Left ventricle myocardium superior (tissue), 1 donor: ENCODE measurements at regions of chr5 and their contacts with region 1.

Region 1: DNA sequence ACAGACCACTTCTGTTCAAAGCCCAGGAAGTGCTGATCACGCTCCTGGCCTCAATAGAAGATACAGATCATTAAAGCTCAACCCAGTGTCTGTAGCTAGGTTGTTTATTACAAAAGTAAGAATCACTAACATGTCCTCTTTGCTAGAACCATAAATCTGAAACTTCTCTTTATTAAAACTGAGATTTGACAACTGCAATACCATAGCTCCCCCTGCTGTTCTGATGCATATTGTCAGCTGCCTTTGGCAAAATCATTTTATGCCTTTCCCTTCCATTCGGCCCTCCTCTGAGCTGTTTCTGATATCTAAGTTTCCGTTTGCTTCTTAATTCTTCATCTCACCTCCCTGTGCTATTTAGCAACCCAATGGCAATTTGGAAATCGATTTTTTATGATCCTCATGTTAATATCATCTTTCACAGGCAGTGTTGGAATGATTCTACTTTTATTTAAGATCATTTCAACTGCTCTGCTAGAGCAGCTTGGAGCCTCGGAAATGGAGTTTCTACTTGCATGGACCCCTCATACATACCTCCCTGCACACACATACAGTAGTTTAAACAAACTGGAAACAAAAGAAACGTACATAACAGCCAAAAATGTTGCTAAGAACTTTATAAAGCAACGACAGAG is 998.8 kb downstream of the MAT2B start:
- DNase-seq: no peak
- ATAC-seq: no peak

Region 2: GRCh38 chr5:163564321-163564938 is 939.8 kb before region 1 on chr5:
- intact Hi-C with region 1: loop called (anchors 10 kb)
- DNase-seq: peak; percentile 27
- ATAC-seq: peak; percentile 53

Region 3: GRCh38 chr5:164013077-164013670 is 491.1 kb before region 1 on chr5:
- intact Hi-C with region 1: loop called (anchors 5 kb)
- DNase-seq: no peak
- ATAC-seq: no peak